ENCODE measurements at regions of chr6 and their contacts with region 1.

Region 1: DNA sequence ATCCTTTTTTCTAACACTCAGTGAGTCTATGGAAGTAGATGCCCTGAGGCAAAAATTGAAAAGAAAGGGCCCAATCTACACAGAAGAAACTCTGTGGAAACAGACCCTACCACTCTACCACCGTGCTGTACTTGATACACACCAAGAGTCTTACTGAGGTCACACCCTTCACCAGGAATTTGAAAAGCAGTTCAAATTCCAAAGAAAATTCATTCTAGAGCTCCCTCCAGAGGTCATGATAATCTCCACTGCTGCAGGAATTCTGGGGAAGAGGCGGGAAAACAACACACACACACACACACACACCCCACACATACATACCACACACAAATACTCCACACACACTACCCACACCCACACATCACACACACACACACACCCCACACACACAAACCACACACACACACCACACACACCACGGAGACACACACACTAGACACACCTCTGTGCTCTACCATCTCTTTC is 336.8 kb downstream of the HDGFL1 start:
- DNase-seq: peak; percentile 56
- H3K4me3 ChIP-seq: no peak overlapping the region
- H3K27ac ChIP-seq: peak overlapping the region; percentile 3
- H3K4me1 ChIP-seq: no peaks in the 10 kb centered on the region
- H3K27me3 ChIP-seq: no peaks in the 10 kb centered on the region
- CTCF ChIP-seq: peak; percentile 34 to 35
- POLR2A ChIP-seq: no peak

Region 2: DNA sequence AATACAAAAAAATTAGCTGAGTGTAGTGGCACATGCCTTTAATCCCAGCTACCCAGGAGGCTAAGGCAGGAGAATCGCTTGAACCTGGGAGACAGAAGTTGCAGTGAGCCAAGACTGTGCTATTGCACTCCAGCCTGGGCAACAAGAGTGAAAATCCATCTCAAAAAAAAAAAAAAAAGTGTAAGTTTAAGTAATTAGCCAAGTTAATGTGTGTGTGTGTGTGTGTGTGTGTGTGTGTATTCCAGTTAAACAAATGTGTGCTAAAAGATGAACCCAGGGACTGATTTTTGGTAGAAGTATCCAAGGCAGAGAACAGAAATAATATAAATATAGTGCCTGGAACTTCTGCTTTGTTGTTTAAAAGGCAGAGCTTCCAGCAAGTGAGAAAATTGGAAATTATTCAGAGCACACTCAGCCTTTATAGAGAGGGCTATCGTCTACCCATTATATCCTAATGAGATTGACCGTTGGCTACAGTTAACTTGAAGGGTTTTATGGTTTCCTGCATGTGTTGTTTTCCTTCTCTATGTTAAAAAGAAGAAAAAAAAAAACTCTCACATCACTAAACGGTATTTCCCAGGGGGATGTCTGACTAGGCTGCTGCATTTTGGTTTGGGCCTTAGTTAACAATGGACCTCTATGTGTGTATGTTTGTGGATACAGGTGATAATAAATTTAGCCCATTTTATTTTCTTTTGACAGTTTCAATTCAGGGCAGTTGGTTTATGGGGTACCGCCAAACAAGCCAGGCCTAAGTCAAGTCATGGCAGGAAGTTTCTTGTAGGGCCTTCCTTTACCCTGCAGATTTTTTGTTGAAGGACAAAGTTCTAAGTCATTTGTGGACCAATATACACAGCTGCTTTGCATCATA is 1302.8 kb before region 1 on chr6:
- CTCF ChIA-PET with region 1: no interaction called
- POLR2A ChIA-PET with region 1: no interaction called
- dilution Hi-C with region 1: no loop called
- intact Hi-C with region 1: loop called (anchors 5 kb)
- DNase-seq: peak; percentile 86
- H3K4me3 ChIP-seq: no peak overlapping the region
- H3K27ac ChIP-seq: no peak overlapping the region
- H3K4me1 ChIP-seq: peaks cover 16% of the 10 kb centered on the region
- H3K27me3 ChIP-seq: no peaks in the 10 kb centered on the region
- CTCF ChIP-seq: no peak
- POLR2A ChIP-seq: no peak

Region 3: GRCh38 chr6:22892452-22892851 is 13.7 kb before region 1 on chr6:
- CTCF ChIA-PET with region 1: interaction called, 16 read pairs
- POLR2A ChIA-PET with region 1: no interaction called
- dilution Hi-C with region 1: no loop called
- intact Hi-C with region 1: no loop called
- DNase-seq: peak; percentile 96
- H3K4me3 ChIP-seq: no peak overlapping the region
- H3K27ac ChIP-seq: peak overlapping the region; percentile 95
- H3K4me1 ChIP-seq: peaks cover 28% of the 10 kb centered on the region
- H3K27me3 ChIP-seq: no peaks in the 10 kb centered on the region
- CTCF ChIP-seq: no peak
- POLR2A ChIP-seq: peak; percentile 19

Region 4: DNA sequence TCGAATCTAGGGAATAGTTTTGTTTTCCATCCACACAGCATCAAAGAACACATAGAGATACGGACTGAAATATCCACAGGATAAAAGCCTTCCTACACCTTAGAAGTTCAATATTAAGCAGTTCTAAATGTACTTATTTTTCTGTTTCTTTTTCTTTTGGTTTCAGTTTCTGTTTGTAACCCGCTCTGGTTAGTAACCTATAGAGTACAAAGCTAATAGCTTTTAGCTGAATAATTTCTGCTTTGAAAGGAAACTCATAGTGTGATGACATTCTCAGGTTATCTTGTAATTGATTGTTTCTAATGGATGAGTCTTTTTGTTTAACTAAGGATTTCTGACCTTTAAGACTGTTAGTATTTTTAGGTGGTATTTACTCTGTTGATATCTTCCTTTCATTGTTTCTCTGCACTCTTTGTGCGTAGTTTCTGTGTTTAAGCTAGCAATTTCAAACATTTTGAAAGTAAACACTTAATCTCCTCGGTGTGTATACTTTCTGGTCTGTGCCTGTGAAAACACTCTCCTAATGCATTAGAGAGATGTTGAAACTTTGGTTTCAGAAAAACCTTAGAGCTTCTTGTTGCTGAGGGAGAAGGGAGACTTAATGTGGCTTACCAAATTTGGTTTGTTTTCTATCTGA is 48.7 kb after region 1 on chr6:
- CTCF ChIA-PET with region 1: no interaction called
- POLR2A ChIA-PET with region 1: no interaction called
- dilution Hi-C with region 1: no loop called
- intact Hi-C with region 1: no loop called
- DNase-seq: peak; percentile 68
- H3K4me3 ChIP-seq: peak overlapping the region; percentile 10 to 57 (median 39)
- H3K27ac ChIP-seq: peak overlapping the region; percentile 53
- H3K4me1 ChIP-seq: peaks cover 3% of the 10 kb centered on the region
- H3K27me3 ChIP-seq: no peaks in the 10 kb centered on the region
- CTCF ChIP-seq: no peak
- POLR2A ChIP-seq: no peak

Region 5: GRCh38 chr6:23111984-23112383 is 205.9 kb after region 1 on chr6:
- CTCF ChIA-PET with region 1: no interaction called
- POLR2A ChIA-PET with region 1: no interaction called
- dilution Hi-C with region 1: no loop called
- intact Hi-C with region 1: no loop called
- DNase-seq: no peak
- H3K4me3 ChIP-seq: no peak overlapping the region
- H3K27ac ChIP-seq: no peak overlapping the region
- H3K4me1 ChIP-seq: no peaks in the 10 kb centered on the region
- H3K27me3 ChIP-seq: no peaks in the 10 kb centered on the region
- CTCF ChIP-seq: no peak
- POLR2A ChIP-seq: no peak

Measured in endothelial cell of umbilical vein (primary cell).